ENCODE measurements at regions of chr9 and their contacts with region 1.

Region 1: GRCh38 chr9:130997925-130998596 is 10.9 kb upstream of the LAMC3 start:
- DNase-seq: peak; percentile 54 to 87 (median 70)
- ATAC-seq: peak; percentile 49 to 89 (median 81)
- H3K4me3 ChIP-seq: no peak overlapping the region
- H3K27ac ChIP-seq: no peak overlapping the region
- H3K4me1 ChIP-seq: peaks cover 0 to 13% (median 0%) of the 10 kb centered on the region in 12 donors
- H3K27me3 ChIP-seq: peaks cover 0 to 36% (median 6%) of the 10 kb centered on the region in 9 donors
- CTCF ChIP-seq: peak; percentile 53 to 75 (median 64)
- POLR2A ChIP-seq: no peak

Region 2: DNA sequence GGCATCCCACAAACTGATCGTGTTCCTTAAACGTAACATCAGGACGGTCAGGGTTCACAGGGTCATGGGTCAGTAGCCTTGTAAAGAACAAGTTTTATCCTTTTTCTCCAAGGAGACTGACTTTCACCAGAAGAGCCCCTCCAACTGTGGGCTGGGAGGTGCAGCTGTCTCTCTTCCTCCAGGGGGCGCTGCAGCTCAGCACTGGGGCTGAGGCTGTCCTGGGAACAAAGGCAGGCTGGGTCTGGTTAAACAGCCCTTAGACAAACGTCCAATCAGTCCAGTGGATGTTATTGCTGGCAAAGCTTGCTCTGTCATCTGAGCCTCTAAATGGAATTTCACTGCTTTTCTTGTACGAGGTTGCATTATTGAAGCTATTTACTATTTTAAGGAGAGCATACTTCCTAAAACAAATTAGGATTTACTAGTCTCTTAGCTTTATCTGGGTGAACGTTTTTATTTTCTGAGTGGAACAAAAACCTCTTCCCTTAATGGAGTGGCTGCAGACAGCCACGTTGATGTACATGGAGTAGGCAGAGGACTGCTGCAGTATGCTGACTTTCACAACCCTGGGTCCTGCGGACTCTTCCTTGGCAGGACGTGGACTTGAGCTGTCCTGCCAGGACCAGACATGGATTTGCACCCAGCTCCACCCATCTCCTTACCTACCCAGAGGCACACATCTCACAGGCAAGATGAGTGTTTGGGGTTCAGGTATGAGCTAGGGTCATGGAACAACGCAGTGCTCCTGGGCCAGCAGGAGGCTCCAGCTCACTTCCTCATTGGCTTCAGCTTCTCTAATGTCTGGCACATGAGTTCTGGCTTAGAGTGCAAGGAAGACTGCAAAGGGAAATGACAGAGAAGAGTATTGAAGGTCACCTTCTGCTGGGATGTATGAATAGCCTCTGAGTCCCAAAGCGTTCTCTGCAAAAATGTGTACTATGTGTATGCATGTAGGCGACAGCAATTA is 296.7 kb before region 1 on chr9:
- intact Hi-C with region 1: loop called in 7 of 10 experiments (anchors 2 to 10 kb)
- DNase-seq: peak; percentile 80 to 89 (median 82)
- ATAC-seq: peak; percentile 90 to 96 (median 92)
- H3K4me3 ChIP-seq: no peak overlapping the region
- H3K27ac ChIP-seq: peak overlapping the region in 4 of 12 donors; percentile 3 to 50 (median 15)
- H3K4me1 ChIP-seq: peaks cover 0 to 17% (median 8%) of the 10 kb centered on the region in 12 donors
- H3K27me3 ChIP-seq: no peaks in the 10 kb centered on the region
- CTCF ChIP-seq: peak; percentile 90 to 97 (median 93)
- POLR2A ChIP-seq: no peak

Region 3: DNA sequence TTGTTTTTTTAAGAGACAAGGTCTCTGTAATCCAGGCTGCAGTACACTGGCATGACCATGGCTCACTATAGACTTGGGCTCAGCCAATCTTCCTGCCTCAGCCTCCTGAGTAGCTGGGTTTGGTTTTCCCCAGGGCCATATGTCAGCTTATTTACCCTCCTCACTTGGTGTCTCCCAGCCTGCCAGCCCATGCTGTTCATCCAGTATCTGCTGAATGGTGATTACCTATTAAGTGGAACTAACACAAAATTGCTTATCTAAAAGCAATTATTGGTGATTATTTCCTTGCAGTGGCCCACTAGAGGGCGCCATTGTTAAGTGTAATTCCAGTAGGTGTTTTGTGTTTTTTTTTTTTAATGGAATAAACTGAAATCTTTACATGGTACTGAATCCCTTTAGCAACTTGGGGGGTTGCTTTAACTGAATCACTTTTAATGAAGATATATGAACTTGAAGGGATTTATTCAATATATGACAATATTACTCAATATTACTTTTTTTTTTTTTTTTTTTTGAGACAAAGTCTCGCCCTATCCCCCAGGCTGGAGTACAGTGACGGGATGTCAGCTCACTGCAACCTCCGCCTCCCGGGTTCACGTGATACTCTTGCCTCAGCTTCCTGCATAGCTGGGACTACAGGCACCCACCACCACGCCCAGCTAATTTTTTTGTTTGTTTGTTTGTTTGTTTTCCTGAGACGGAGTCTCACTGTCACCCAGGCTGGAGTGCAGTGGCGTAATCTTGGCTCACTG is 290.7 kb before region 1 on chr9:
- intact Hi-C with region 1: loop called in 6 of 10 experiments (anchors 2 to 10 kb)
- DNase-seq: peak in 3 of 5 donors; percentile 61 to 77 (median 71)
- ATAC-seq: peak in 1 of 4 donors; percentile 27
- H3K4me3 ChIP-seq: no peak overlapping the region
- H3K27ac ChIP-seq: no peak overlapping the region
- H3K4me1 ChIP-seq: peaks cover 0 to 9% (median 0%) of the 10 kb centered on the region in 12 donors
- H3K27me3 ChIP-seq: no peaks in the 10 kb centered on the region
- CTCF ChIP-seq: peak; percentile 65 to 85 (median 82)
- POLR2A ChIP-seq: no peak

Region 4: DNA sequence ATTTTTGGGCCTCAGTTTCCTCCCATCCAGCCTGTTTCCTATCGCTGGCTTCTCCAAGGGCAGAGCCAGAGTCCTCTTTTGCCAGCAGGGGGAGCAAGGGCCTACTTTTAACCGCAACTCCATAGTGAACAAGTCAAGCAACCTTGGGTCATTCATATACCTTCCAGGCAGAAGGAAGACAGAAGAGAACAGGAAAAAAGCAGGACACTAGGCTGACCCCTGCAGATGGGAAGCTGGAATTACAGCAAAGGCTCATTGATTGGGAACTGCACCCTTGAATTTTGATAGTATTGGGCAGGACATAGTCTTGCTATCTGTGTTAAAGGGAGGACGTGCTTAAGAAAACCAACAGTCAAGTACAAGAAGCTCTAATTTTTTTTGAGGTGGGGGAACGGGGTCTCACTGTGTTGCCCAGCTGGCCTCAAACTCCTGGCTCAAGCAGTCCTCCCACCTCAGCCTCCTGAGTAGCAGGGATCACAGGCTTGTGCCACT is 131.5 kb before region 1 on chr9:
- intact Hi-C with region 1: loop called in 8 of 10 experiments (anchors 1 to 5 kb)
- DNase-seq: peak in 4 of 5 donors; percentile 61 to 72 (median 66)
- ATAC-seq: peak; percentile 29 to 50 (median 38)
- H3K4me3 ChIP-seq: no peak overlapping the region
- H3K27ac ChIP-seq: peak overlapping the region in 1 of 12 donors; percentile 20
- H3K4me1 ChIP-seq: peaks cover 3 to 55% (median 28%) of the 10 kb centered on the region in 12 donors
- H3K27me3 ChIP-seq: no peaks in the 10 kb centered on the region
- CTCF ChIP-seq: peak; percentile 66 to 86 (median 79)
- POLR2A ChIP-seq: no peak

Region 5: DNA sequence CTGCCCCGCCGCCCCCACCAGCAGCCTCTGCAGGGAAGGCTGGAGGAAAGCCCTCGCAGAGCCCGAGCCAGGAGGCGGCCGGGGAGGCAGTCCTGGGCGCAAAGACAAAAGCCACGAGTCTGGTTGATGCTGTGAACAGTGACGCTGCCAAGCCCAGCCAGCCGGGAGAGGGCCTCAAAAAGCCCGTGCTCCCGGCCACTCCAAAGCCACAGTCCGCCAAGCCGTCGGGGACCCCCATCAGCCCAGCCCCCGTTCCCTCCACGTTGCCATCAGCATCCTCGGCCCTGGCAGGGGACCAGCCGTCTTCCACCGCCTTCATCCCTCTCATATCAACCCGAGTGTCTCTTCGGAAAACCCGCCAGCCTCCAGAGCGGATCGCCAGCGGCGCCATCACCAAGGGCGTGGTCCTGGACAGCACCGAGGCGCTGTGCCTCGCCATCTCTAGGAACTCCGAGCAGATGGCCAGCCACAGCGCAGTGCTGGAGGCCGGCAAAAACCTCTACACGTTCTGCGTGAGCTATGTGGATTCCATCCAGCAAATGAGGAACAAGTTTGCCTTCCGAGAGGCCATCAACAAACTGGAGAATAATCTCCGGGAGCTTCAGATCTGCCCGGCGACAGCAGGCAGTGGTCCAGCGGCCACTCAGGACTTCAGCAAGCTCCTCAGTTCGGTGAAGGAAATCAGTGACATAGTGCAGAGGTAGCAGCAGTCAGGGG is 112.9 kb before region 1 on chr9:
- intact Hi-C with region 1: no loop called
- DNase-seq: peak in 2 of 5 donors; percentile 21 to 57
- ATAC-seq: no peak
- H3K4me3 ChIP-seq: no peak overlapping the region
- H3K27ac ChIP-seq: peak overlapping the region in 1 of 12 donors; percentile 65
- H3K4me1 ChIP-seq: no peaks in the 10 kb centered on the region
- H3K27me3 ChIP-seq: no peaks in the 10 kb centered on the region
- CTCF ChIP-seq: no peak
- POLR2A ChIP-seq: no peak

Region 6: DNA sequence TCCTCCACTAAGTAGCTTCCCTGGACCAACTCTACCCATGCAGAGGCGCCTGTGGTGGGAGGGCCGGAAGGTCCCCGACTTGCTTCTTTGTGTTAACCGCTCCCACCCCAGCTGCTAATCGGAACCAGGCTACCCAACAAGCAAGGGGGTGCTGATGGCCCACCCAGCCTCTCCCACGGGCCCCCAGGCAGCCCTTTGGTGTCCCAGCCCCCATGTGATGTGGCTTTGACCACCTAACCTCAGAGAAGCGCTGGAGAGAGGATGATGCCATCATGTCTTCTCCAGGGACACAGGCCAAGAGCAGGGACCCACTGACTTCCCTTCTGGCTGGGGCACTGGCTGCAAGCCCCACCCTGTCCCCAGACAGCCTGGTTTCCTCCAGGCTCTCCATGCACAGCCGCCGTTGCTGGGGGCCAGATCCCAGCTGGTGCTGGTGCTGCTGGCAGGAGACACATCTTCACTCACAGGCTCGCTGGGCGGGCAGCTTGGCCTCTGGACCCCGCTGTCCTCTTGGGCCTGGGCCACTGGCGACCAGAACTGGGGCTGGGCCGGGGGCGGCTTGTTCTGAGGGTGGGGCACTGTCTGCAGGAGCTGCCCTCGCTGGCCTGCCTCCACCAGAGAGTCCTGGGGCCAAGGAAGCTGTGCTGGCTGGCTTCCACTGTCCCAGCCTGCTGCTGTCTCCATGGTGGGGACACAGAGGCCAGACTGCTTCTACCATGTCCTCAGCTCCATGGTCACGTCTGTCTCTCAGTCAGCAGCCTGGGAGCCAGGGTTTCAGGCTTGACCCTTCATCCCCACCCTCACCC is 38.7 kb after region 1 on chr9:
- intact Hi-C with region 1: no loop called
- DNase-seq: peak in 2 of 5 donors; percentile 49 to 73
- ATAC-seq: peak; percentile 37 to 64 (median 54)
- H3K4me3 ChIP-seq: no peak overlapping the region
- H3K27ac ChIP-seq: peak overlapping the region in 2 of 12 donors; percentile 22 to 46
- H3K4me1 ChIP-seq: peaks cover 0 to 22% (median 17%) of the 10 kb centered on the region in 12 donors
- H3K27me3 ChIP-seq: no peaks in the 10 kb centered on the region
- CTCF ChIP-seq: no peak
- POLR2A ChIP-seq: no peak

Measured in heart left ventricle (tissue), 16 donors.